ENCODE measurements at regions of chr1 and their contacts with region 1.

Region 1: GRCh38 chr1:27111626-27112573 is 43.0 kb downstream of the SLC9A1 start:
- DNase-seq: peak; percentile 100
- ATAC-seq: peak; percentile 97
- H3K4me3 ChIP-seq: no peak overlapping the region
- H3K27ac ChIP-seq: peak overlapping the region; percentile 47
- H3K4me1 ChIP-seq: peaks cover 17% of the 10 kb centered on the region
- H3K27me3 ChIP-seq: no peaks in the 10 kb centered on the region
- CTCF ChIP-seq: peak; percentile 60
- POLR2A ChIP-seq: no peak
- RAD21 ChIP-seq: peak; percentile 63

Region 2: DNA sequence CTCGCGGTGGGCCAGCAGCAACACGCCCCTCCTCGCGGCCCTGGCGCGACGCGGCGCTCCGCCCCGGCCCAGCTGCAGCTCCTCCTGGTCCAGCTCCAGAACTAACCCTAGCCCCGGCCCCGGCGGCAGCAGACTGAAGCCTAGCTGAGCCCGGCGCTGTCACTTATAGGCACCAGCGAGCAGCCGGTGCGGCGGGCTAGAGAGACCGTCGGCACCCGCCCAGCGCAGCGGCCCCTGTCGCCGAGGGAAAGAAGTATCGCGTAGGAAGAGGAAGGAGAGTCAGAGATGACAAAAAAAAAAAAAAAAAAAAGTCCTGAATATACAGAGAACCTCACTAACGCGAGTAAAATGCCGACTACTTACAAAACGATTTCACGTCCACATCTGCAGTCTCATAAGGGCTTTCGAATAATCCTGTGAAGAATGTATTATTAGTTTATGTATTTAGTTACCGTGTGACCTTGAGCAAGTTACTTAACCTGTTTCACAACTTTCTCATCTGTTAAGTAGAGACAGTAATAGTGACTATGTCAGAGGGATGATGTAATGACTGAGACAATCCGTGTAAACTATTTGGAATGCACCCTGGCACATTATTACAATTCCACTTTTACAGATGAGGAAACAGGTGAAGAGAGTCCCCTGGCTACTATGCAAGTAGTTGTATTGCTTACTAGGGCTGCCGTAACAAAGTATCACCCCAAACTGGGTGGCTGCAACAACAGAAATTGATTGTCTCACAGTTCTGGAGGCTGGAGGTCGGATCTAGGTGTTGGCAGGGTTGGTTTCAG is 43.3 kb after region 1 on chr1 and contains the start of gene SLC9A1:
- CTCF ChIA-PET with region 1: interaction called, 4 read pairs
- POLR2A ChIA-PET with region 1: interaction called, 3 read pairs
- dilution Hi-C with region 1: no loop called
- in situ Hi-C with region 1: loop called (anchors 5 kb)
- intact Hi-C with region 1: loop called (anchors 1 kb)
- DNase-seq: peak; percentile 90
- ATAC-seq: peak; percentile 94
- H3K4me3 ChIP-seq: peak within 1 kb of the TSS; percentile 61
- H3K27ac ChIP-seq: peak within 1 kb of the TSS; percentile 72
- H3K4me1 ChIP-seq: peaks cover 31% of the 10 kb centered on the region
- H3K27me3 ChIP-seq: no peaks in the 10 kb centered on the region
- CTCF ChIP-seq: peak; percentile 93
- POLR2A ChIP-seq: peak; percentile 100
- RAD21 ChIP-seq: peak; percentile 33; the same call in 1 of the 2 replicates
- total RNA-seq, gene SLC9A1: 1.9 and 2.0 TPM in 2 replicates

Measured in IMR-90 (cell line).